ENCODE measurements at regions of chr12 and their contacts with region 1.

Region 1: GRCh38 chr12:1185460-1186182 is 194.6 kb downstream of the ERC1 start:
- DNase-seq: no peak
- H3K4me3 ChIP-seq: no peak overlapping the region
- H3K27ac ChIP-seq: no peak overlapping the region
- H3K4me1 ChIP-seq: no peaks in the 10 kb centered on the region
- H3K27me3 ChIP-seq: no peaks in the 10 kb centered on the region
- CTCF ChIP-seq: no peak

Region 2: GRCh38 chr12:1517007-1517406 is 331.4 kb after region 1 on chr12:
- intact Hi-C with region 1: no loop called
- DNase-seq: peak in 1 of 2 donors; percentile 20
- H3K4me3 ChIP-seq: no peak overlapping the region
- H3K27ac ChIP-seq: no peak overlapping the region
- H3K4me1 ChIP-seq: peaks cover 0 to 15% (median 11%) of the 10 kb centered on the region in 4 donors
- H3K27me3 ChIP-seq: no peaks in the 10 kb centered on the region
- CTCF ChIP-seq: no peak

Region 3: GRCh38 chr12:2477009-2477766 is 1291.6 kb after region 1 on chr12:
- intact Hi-C with region 1: loop called (anchors 5 kb)
- DNase-seq: no peak
- H3K4me3 ChIP-seq: no peak overlapping the region
- H3K27ac ChIP-seq: no peak overlapping the region
- H3K4me1 ChIP-seq: no peaks in the 10 kb centered on the region
- H3K27me3 ChIP-seq: no peaks in the 10 kb centered on the region
- CTCF ChIP-seq: no peak